Motor neuron (in vitro differentiated cells): ENCODE measurements at regions of chr7 and their contacts with region 1.

Region 1: GRCh38 chr7:104848138-104848990 is 165.6 kb upstream of the KMT2E start:
- ATAC-seq: peak; percentile 48 to 85 (median 68)
- H3K4me3 ChIP-seq: no peak overlapping the region
- H3K27ac ChIP-seq: no peak overlapping the region
- H3K4me1 ChIP-seq: peaks cover 0 to 5% of the 10 kb centered on the region in 2 donors

Region 2: GRCh38 chr7:104272767-104273384 is 575.5 kb before region 1 on chr7:
- in situ Hi-C with region 1: loop called in 1 of 9 experiments (anchors 25 kb)
- ATAC-seq: peak in 4 of 8 experiments; percentile 50 to 70 (median 62)
- H3K4me3 ChIP-seq: no peak overlapping the region
- H3K27ac ChIP-seq: no peak overlapping the region
- H3K4me1 ChIP-seq: no peaks in the 10 kb centered on the region

Region 3: DNA sequence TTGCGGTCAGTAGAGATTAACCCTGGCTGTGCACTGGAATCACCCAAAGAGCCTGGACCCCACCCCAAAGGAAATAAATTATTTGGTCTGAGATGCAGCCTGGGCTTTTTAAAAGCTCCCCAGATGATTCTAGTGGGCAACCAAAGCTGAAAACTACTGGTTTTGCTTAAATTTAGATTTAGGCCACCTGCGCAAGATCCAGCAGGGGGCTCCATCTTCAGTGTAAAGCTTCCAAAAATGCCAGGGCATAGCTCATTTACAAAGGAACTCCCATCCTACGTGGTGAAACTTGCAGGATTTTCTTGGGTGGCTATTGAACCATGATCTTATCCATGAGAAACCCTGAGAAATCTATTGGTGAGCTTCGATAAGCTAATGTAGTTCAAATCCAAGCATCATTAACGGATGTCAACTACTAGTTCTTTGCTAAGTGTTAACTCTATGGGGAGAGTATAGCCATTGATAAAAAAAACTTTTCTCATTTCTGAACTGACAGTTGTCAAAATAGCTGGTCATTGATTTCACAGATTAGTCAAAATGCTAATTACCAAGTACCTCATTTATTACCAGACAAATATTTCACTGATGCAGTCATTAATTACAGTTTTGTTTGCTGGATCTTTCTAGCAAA is 204.7 kb before region 1 on chr7:
- in situ Hi-C with region 1: loop called in 1 of 9 experiments (anchors 25 kb)
- ATAC-seq: peak in 1 of 8 experiments; percentile 45
- H3K4me3 ChIP-seq: no peak overlapping the region
- H3K27ac ChIP-seq: no peak overlapping the region
- H3K4me1 ChIP-seq: no peaks in the 10 kb centered on the region